ENCODE measurements at regions of chr7 and their contacts with region 1.

Region 1: GRCh38 chr7:76302347-76303201 is at the start of gene HSPB1:
- DNase-seq: peak; percentile 97 to 98
- ATAC-seq: peak; percentile 90
- H3K4me3 ChIP-seq: peak within 1 kb of the TSS; percentile 91 to 92
- H3K27ac ChIP-seq: peak within 1 kb of the TSS; percentile 85 to 91
- H3K4me1 ChIP-seq: no peaks in the 10 kb centered on the region
- H3K27me3 ChIP-seq: no peaks in the 10 kb centered on the region
- total RNA-seq, gene HSPB1: 1,225 to 2,295 TPM

Region 2: GRCh38 chr7:76291343-76292212 is 11.0 kb before region 1 on chr7:
- intact Hi-C with region 1: loop called in 1 of 2 experiments (anchors 1 kb)
- DNase-seq: peak; percentile 93 to 97
- ATAC-seq: peak; percentile 88
- H3K4me3 ChIP-seq: peak overlapping the region in 1 of 2 donors; percentile 37
- H3K27ac ChIP-seq: peak overlapping the region; percentile 89 to 93
- H3K4me1 ChIP-seq: peaks cover 0 to 3% of the 10 kb centered on the region in 2 donors
- H3K27me3 ChIP-seq: no peaks in the 10 kb centered on the region